ENCODE measurements at regions of chr2 and their contacts with region 1.

Region 1: GRCh38 chr2:127701193-127701650 is at the start of gene SFT2D3:
- H3K4me3 ChIP-seq: peak within 1 kb of the TSS; percentile 60
- H3K27ac ChIP-seq: peak within 1 kb of the TSS; percentile 95
- H3K4me1 ChIP-seq: no peaks in the 10 kb centered on the region; the same call in 1 of the 2 replicates
- CTCF ChIP-seq: no peak; the same call in 1 of the 2 replicates

Region 2: DNA sequence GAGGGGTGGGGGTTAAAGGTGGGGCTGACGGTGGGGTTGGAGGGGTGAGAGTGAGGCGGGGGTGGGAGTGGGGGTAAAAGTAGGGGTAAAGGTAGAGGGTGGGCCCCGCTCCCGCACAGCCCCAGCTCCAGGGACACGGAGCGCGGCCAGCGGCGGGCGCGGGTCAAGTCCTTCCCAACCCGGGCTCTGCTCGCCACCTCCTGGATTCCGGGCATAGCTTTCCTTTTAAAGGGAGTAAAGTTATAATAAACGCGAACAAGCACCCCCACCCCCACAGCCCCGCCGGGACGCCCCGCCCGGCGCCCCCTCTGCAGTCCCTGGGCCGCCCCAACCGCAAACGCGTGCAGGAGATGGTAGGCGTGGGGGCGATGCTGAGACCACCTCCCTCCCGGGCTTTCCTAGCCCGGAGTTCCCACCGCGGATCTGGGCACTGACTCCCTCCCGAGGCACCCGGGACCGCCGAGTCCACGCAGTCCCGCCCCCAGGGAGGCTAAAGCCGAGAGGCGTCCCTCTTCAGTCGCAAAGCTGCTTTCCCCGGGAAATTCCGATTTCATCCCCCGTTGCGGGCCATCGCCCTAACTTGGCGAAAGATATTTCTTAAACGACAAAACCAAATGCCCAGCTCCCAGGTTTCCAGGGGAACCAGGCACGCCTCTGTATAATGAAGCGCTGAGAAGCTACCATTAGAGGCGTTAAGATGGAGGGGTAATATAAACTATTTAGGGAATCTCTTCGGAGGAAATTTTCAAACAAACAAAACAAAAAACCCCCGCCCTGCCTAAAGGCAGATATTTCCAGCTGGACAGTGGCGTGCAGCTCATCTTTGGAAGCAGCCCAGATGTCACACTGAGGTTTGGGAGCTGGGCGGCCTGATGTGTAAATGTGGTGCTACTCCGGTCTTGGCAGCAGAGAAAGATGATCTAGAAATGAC is 25.6 kb before region 1 on chr2 and contains the start of gene LIMS2:
- CTCF ChIA-PET with region 1: interaction called, 5 read pairs
- POLR2A ChIA-PET with region 1: interaction called, 12 read pairs
- H3K4me3 ChIP-seq: peak within 1 kb of the TSS; percentile 41
- H3K27ac ChIP-seq: peak within 1 kb of the TSS; percentile 28; the same call in 1 of the 2 replicates
- H3K4me1 ChIP-seq: no peaks in the 10 kb centered on the region
- CTCF ChIP-seq: no peak